ENCODE measurements at regions of chr2 and their contacts with region 1.

Region 1: GRCh38 chr2:138155304-138155703 is 191.0 kb downstream of the HNMT start:
- DNase-seq: no peak
- ATAC-seq: no peak
- H3K4me3 ChIP-seq: no peak overlapping the region
- H3K27ac ChIP-seq: no peak overlapping the region
- H3K4me1 ChIP-seq: no peaks in the 10 kb centered on the region
- H3K27me3 ChIP-seq: no peaks in the 10 kb centered on the region
- CTCF ChIP-seq: no peak
- POLR2A ChIP-seq: no peak

Region 2: GRCh38 chr2:137339051-137339450 is 816.3 kb before region 1 on chr2:
- intact Hi-C with region 1: no loop called
- DNase-seq: no peak
- ATAC-seq: no peak
- H3K4me3 ChIP-seq: no peak overlapping the region
- H3K27ac ChIP-seq: no peak overlapping the region
- H3K4me1 ChIP-seq: peaks cover 0 to 2% (median 0%) of the 10 kb centered on the region in 12 donors
- H3K27me3 ChIP-seq: no peaks in the 10 kb centered on the region
- CTCF ChIP-seq: no peak
- POLR2A ChIP-seq: no peak

Region 3: GRCh38 chr2:138107292-138107691 is 48.0 kb before region 1 on chr2:
- intact Hi-C with region 1: loop called in 1 of 10 experiments (anchors 2 kb)
- DNase-seq: no peak
- ATAC-seq: no peak
- H3K4me3 ChIP-seq: no peak overlapping the region
- H3K27ac ChIP-seq: no peak overlapping the region
- H3K4me1 ChIP-seq: no peaks in the 10 kb centered on the region
- H3K27me3 ChIP-seq: no peaks in the 10 kb centered on the region
- CTCF ChIP-seq: no peak
- POLR2A ChIP-seq: no peak